ENCODE measurements at regions of chr10 and their contacts with region 1.

Region 1: DNA sequence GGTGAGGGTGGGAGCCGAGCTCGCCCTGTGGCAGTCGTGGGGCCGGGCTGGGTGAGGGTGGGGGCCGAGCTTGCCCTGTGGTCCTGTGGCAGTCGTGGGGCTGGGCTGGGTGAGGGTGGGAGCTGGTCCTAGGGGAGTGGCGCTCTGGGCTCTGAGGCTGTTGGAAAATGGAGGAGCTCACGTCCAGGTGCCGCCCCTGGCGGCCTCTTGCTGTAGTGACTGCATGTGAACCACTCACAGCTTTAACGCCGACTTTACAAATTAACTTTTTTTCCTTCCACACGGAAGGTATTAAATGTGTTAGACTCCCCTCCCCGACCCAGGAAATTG is 312.6 kb downstream of the WDR37 start:
- DNase-seq: peak; percentile 63 to 69 (median 66)
- ATAC-seq: peak; percentile 99
- H3K4me3 ChIP-seq: no peak overlapping the region
- H3K27ac ChIP-seq: no peak overlapping the region
- H3K4me1 ChIP-seq: peaks cover 0 to 4% of the 10 kb centered on the region in 2 experiments; a peak in 1 of 5 replicates
- H3K27me3 ChIP-seq: peaks cover 6 to 51% of the 10 kb centered on the region in 2 experiments
- CTCF ChIP-seq: peak; percentile 66
- EP300 ChIP-seq: no peak
- POLR2A ChIP-seq: no peak
- RAD21 ChIP-seq: peak in 1 of 2 experiments; percentile 33; a peak in 2 of 4 replicates

Region 2: DNA sequence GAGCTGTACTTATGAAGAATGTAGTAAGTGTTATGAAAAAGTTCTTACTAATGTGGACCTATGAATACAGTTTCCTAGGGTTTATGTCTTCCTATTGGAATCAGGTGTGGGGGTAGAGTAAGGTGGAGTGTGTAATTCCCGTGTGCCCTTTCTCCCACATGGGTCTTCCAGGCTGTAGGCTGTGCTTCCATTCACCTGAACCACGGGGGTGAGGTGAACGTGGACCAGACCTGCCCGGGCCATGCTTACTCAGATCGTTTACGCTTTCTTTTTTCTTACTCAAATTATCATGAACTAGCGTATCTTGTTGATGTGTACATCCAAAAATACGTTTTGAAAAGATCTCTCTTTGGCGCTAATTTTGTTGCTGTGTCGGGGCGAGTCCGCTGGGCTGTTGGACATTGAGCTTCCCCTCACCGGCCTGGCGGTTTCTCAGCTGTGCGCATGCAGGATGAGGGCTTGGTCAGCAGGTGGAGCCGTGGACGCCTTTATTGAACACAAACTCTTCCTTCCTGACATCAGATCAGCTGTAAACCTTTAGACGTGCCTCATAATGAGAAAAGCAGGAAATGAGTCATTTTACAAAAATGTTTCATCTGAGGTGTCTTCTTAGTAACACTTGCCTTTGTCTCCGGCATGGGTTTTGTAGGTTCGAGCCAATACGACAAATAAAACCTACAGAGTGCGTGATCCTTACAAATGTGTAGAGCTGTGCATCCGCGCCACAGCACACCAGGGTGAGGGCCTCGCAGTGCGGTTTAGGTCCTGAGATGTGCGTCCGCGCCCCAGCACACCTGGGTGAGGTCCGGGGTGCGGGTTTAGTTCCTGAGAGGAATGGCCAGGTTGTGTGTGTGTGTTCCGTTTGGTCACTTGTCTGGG is 258.8 kb before region 1 on chr10:
- CTCF ChIA-PET with region 1: no interaction called
- POLR2A ChIA-PET with region 1: no interaction called
- in situ Hi-C with region 1: no loop called
- intact Hi-C with region 1: loop called (anchors 5 kb)
- DNase-seq: peak; percentile 70 to 79 (median 72)
- ATAC-seq: peak; percentile 98
- H3K4me3 ChIP-seq: no peak overlapping the region
- H3K27ac ChIP-seq: 0 out of 3 replicates have a peak overlapping the region, but pooled peaks have one; percentile 29
- H3K4me1 ChIP-seq: peaks cover 4 to 6% of the 10 kb centered on the region in 2 experiments; a peak in 2 of 5 replicates
- H3K27me3 ChIP-seq: no peaks in the 10 kb centered on the region
- CTCF ChIP-seq: peak; percentile 70 to 80 (median 71)
- EP300 ChIP-seq: no peak
- POLR2A ChIP-seq: no peak
- RAD21 ChIP-seq: peak; percentile 21 to 68; a peak in 3 of 4 replicates

Measured in K562 (cell line).